ENCODE measurements at regions of chr11 and their contacts with region 1.

Region 1: DNA sequence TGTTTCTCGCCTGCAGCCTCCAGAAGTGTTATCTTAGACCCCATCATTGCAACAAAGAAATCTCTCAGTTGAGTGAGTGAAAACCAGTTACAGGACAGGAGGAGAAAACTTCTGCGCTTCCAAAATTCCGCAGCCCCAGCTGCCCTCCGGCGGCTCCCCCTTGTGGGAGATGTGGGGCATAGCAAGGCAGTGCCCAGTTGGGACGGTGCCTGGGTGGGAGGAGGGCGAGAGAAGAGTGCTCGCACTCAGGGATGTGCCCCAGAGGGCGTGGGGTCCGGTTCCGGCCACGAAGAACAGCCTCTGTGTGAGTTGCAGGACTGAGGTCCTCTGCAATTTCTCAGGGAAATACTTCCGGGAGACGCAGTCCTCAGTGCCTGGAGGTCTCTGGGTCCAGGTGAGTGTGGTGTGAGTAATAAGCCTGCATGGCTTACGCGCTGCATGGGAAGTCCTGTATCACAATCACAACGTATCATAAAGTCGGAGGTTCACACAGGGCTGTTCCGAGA is 87.0 kb upstream of the BLID start:
- DNase-seq: peak; percentile 63
- CTCF ChIP-seq: peak; percentile 94

Region 2: DNA sequence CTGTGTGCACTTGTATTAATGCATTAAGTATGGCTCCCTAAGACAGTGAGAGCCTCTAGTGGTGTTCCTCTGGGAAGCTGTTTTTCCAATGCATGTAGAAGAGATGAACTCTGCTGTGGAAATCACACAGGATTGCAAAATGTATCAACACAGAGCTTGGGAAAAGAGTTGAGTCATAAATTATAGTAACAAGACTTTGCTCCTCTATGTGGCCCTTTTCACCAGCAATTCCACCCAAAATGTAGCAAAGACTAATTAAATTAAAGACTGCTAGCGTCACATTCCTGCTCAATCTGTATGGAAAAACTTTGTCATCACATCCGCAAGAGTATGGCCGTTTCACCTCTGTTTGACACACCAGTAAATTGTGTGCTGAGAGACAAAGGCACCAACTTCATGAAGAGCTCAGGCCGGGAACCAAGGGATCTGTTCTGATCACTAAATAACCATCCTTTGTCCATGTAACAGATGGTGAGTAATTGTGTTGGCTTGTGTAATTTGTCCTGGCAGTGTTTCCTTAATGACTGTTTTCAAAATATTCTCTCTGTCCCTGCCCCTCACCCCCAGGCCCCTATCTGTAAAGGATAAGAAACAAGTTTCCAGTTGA is 541.0 kb before region 1 on chr11:
- in situ Hi-C with region 1: loop called (anchors 10 kb)
- DNase-seq: no peak
- CTCF ChIP-seq: no peak

Region 3: DNA sequence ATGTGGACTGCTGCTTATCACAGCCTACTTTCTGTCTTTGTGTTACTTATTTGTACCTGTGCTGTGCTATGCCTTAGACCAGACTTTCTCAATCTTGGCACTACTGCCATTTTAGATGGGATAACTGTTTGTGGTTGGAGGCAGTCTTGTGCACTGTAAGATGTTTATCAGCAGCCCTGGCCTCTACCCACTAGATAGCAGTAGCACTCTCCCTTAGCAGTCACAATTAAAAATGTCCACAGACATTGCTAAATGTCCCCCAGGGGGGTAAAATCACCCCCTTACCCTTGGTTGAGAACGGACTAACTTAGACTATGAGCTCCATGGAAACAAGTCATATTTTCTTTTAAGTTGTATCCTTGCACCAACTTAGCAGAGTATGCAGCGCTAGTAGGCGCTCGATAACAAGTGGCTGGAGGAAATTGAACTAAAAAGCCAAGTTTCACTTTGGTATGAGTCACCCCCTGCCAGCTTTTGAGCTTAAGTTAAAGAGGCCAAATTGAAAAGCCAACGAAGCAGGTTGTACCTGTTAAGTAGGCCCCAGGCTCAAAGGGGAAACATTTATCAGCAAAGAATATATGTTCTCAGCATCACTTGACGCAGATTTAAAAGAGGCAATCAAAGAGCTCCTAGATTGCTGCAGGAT is 445.4 kb before region 1 on chr11:
- in situ Hi-C with region 1: no loop called
- DNase-seq: no peak
- CTCF ChIP-seq: no peak

Region 4: DNA sequence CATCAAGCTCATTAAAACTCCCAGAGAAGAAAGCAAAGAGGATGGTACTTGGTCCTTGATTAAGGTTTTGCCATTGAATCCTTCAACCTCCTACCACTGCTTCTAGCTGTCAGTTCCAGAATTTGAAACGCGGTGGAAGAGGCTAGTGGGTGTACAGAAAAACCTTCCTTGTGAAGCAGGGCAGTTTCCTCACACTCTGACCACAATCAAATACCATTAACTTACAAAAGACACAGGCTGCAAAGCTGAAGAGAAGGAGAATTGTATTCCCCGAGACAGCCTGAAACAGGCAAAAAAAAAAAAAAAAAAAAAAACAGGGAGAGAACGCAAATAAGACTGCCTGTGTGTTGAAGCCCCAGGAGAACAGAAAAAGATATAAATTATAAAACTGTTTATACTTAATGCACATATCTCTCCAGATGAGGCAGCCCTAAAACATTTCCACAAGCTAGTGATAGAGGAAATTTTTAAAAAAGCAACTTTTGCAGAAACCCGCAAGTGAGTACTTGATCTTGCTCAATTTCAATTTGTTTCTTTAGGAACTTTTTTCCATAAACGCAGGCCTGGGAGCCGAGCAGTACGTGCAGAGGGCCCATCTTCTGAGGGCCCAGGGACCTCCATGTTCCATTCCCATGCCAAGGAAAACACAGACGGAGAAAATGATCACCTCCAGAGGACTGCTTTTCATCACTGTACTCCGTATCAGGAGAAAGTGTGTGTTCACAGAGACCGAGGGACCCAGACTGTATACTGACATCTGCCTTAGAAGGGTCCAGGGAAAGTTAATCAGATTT is 131.7 kb after region 1 on chr11:
- in situ Hi-C with region 1: no loop called
- DNase-seq: no peak
- CTCF ChIP-seq: no peak

Region 5: GRCh38 chr11:122882857-122883645 is 680.0 kb after region 1 on chr11:
- in situ Hi-C with region 1: no loop called
- DNase-seq: peak; percentile 45
- CTCF ChIP-seq: no peak

Measured in GM13977 (cell line).